Endothelial cell of umbilical vein (primary cell): ENCODE measurements at regions of chrX and their contacts with region 1.

Region 1: GRCh38 chrX:41350976-41351569 is 17.1 kb downstream of the DDX3X start:
- DNase-seq: peak; percentile 14
- H3K4me3 ChIP-seq: no peak overlapping the region
- H3K27ac ChIP-seq: no peak overlapping the region
- H3K4me1 ChIP-seq: peaks cover 5% of the 10 kb centered on the region
- H3K27me3 ChIP-seq: no peaks in the 10 kb centered on the region
- CTCF ChIP-seq: no peak
- POLR2A ChIP-seq: peak; percentile 61

Region 2: GRCh38 chrX:41441934-41442823 is 91.1 kb after region 1 on chrX:
- CTCF ChIA-PET with region 1: interaction called, 3 read pairs
- POLR2A ChIA-PET with region 1: no interaction called
- dilution Hi-C with region 1: no loop called
- intact Hi-C with region 1: loop called (anchors 2 kb)
- DNase-seq: peak; percentile 53
- H3K4me3 ChIP-seq: peak overlapping the region in 2 of 3 experiments; percentile 7 to 32
- H3K27ac ChIP-seq: no peak overlapping the region
- H3K4me1 ChIP-seq: no peaks in the 10 kb centered on the region
- H3K27me3 ChIP-seq: no peaks in the 10 kb centered on the region
- CTCF ChIP-seq: peak; percentile 44 to 69
- POLR2A ChIP-seq: no peak

Region 3: DNA sequence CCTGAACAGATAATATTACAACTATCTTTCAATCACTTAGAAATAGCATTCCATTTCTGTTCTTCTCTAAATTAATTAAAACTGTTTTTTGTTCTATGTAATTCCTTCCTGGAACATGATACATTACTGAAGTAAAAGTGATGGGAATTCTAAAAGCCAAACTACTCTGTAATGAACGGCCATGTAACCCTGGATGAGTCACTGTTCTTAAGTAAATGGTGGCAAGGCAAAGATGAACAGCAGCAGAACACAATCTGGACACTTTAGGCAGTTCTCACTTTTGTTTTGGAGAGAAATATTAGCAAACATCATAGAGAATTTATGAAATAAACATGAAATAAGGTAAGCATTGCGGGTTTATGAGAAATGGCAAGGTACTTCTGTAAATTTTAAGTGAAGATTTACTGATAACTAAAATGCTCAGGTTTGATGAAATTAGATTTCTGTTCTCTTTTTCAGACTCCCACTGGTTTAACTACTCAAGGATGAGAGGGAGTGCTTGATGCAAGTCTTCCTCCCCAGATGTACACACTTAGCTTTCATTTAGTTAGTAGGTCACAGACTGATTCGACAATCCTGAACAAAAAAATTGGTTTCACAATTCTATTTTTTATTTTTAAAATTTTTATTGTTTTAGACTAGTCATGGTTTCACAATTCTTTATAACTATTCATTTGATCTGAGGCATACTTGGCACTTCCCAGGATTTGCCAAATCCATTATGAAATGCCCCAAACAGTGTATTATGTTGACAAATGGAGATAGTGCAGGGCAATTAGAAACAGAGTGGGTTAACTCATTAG is 371.9 kb after region 1 on chrX:
- CTCF ChIA-PET with region 1: no interaction called
- POLR2A ChIA-PET with region 1: no interaction called
- dilution Hi-C with region 1: no loop called
- intact Hi-C with region 1: no loop called
- DNase-seq: no peak
- H3K4me3 ChIP-seq: no peak overlapping the region
- H3K27ac ChIP-seq: no peak overlapping the region
- H3K4me1 ChIP-seq: no peaks in the 10 kb centered on the region
- H3K27me3 ChIP-seq: no peaks in the 10 kb centered on the region
- CTCF ChIP-seq: no peak
- POLR2A ChIP-seq: no peak